Sigmoid colon (tissue), 7 donors: ENCODE measurements at regions of chr19 and their contacts with region 1.

Region 1: DNA sequence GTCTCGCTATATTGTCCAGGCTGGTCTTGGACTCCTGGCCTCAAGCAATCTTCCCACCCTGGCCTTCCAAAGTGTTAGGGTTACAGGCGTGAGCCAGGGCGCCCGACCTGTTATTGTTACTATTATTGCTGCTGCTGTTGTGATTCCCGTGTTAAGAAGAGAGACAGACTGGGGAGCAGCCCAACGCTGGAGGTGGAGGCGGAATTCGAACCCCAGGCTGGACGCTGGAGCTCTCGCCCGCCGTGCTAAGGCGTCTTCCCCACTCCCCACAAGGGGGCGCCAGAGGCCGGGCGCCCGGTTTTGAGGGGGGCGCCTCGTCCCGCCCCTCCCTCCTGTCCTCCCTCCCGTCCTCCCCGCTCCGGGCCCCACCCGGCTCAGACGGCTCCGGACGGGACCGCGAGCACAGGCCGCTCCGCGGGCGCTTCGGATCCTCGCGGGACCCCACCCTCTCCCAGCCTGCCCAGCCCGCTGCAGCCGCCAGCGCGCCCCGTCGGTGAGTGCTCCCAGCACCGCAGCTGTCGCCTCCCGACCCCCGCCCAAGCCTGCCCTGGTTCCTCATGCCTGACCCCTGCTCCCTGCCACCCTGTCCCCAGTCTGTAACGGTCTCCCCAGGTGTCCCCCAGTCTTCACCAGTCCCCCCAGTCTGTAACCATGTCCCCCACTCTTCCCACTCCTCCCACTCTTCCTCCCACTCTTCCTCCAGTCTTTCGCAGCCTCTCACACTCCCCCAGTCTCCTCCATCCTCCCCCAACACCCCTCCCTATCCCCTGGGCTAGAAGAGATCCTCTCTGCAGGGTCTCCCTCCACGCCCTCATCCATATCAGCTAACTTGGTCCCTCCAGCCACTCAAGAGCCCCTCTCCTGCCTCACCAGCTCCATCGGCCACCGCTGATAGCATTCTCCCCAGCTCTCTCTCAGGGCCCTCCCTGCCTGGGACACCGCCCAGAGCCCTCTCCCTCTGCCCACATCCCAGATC is at the start of gene EHD2:
- DNase-seq: peak; percentile 93
- H3K4me3 ChIP-seq: peak within 1 kb of the TSS; percentile 79 to 99 (median 92)
- H3K27ac ChIP-seq: peak within 1 kb of the TSS; percentile 95 to 99 (median 96)
- H3K4me1 ChIP-seq: peaks cover 0 to 44% (median 42%) of the 10 kb centered on the region in 4 donors
- H3K27me3 ChIP-seq: no peaks in the 10 kb centered on the region
- CTCF ChIP-seq: peak; percentile 93 to 98 (median 97)
- EP300 ChIP-seq: no peak
- POLR2A ChIP-seq: peak; percentile 82 to 90
- total RNA-seq, gene EHD2: 41.8 to 184 (median 72.4) TPM

Region 2: DNA sequence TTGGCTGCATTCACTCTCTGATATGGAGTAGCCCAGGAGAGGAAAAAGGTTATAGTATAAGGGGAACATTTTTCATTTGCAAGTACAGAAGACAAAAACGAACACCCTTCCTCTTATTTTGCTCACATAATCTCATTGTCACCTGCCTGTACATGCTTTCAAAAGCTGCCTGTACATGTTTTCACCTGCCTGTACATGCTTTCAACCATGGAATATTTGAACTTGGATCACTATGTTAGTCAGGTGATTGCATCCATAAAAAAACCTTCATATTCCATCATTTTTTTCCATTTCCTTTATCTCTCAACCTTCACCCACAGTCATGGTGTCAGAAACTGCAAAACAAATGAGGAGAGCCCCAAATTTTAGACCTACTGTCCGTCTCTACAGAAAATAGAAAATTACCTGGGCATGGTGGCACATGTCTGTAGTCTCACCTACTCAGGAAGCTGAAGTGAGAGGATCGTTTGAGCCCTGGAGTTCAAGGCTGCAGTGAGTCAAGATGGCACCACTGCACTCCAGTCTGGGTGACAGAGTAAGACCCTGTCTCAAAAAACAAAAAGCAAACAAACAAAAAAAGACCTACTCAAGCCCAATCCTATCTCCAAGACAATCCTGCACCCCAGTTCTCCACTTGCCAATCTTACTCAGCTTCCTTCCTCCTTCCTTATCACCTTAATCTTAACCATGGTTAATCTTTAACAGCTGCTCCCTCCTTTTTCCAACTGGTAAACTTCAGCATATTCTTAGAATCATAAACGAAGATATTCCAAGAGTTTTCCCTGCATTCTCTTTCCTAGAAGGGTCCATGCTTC is 1553.7 kb before region 1 on chr19:
- intact Hi-C with region 1: no loop called
- DNase-seq: no peak
- H3K4me3 ChIP-seq: no peak overlapping the region
- H3K27ac ChIP-seq: no peak overlapping the region
- H3K4me1 ChIP-seq: no peaks in the 10 kb centered on the region
- H3K27me3 ChIP-seq: no peaks in the 10 kb centered on the region
- CTCF ChIP-seq: no peak
- EP300 ChIP-seq: no peak
- POLR2A ChIP-seq: no peak

Region 3: GRCh38 chr19:47587295-47587694 is 126.0 kb before region 1 on chr19:
- intact Hi-C with region 1: no loop called
- DNase-seq: no peak
- H3K4me3 ChIP-seq: no peak overlapping the region
- H3K27ac ChIP-seq: no peak overlapping the region
- H3K4me1 ChIP-seq: no peaks in the 10 kb centered on the region
- H3K27me3 ChIP-seq: no peaks in the 10 kb centered on the region
- CTCF ChIP-seq: no peak
- EP300 ChIP-seq: no peak
- POLR2A ChIP-seq: no peak

Region 4: GRCh38 chr19:47778089-47778953 is 65.0 kb after region 1 on chr19 and contains the start of gene SELENOW:
- intact Hi-C with region 1: loop called (anchors 5 kb)
- DNase-seq: peak; percentile 88
- H3K4me3 ChIP-seq: peak within 1 kb of the TSS; percentile 85 to 97 (median 90)
- H3K27ac ChIP-seq: peak within 1 kb of the TSS; percentile 96 to 100 (median 97)
- H3K4me1 ChIP-seq: peaks cover 0 to 52% (median 47%) of the 10 kb centered on the region in 4 donors
- H3K27me3 ChIP-seq: no peaks in the 10 kb centered on the region
- CTCF ChIP-seq: no peak
- EP300 ChIP-seq: no peak
- POLR2A ChIP-seq: peak; percentile 99
- total RNA-seq, gene SELENOW: 1,579 to 3,138 (median 2,179) TPM